ENCODE measurements at regions of chr17 and their contacts with region 1.

Region 1: DNA sequence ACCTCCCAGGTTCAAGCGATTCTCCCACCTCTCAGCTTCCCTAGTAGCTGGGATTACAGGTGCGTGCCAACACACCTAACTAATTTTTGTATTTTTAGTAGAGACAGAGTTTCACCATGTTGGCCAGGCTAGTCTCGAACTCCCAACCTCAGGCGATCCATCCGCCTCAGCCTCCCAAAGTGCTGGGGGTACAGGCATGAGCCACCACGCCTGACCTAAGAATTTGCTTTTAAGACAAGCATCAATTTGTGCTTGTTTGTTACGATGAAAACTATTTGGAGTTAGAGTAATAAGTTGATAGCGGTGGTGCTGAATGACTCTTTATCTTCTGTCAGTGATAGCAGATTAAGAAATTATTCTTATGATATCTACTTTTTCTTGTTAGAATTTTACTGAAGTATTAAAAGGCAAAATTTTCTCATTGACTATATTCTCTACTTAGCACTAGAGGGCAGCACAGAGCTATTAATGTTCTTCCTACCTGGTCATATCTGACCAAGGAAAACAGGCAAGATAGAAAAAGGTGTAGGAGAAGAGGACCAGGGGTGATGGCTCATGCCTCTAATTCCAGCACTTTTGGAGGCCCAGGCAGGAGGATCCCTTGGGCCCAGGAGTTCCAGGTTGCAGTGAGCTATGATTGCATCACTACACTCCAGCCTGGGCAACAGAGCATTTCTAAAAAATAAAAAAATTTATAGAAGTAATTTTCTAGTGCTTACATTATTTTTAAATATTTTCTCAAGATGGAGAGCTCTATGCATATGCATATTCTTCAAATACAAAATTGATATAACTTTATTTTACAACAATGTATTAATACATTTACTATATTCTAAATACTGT is 24.5 kb downstream of the STXBP4 start:
- DNase-seq: no peak
- H3K4me3 ChIP-seq: no peak overlapping the region
- H3K27ac ChIP-seq: no peak overlapping the region
- H3K4me1 ChIP-seq: no peaks in the 10 kb centered on the region
- H3K27me3 ChIP-seq: no peaks in the 10 kb centered on the region
- CTCF ChIP-seq: peak; percentile 53 to 57 (median 53)
- EP300 ChIP-seq: no peak
- POLR2A ChIP-seq: no peak

Region 2: DNA sequence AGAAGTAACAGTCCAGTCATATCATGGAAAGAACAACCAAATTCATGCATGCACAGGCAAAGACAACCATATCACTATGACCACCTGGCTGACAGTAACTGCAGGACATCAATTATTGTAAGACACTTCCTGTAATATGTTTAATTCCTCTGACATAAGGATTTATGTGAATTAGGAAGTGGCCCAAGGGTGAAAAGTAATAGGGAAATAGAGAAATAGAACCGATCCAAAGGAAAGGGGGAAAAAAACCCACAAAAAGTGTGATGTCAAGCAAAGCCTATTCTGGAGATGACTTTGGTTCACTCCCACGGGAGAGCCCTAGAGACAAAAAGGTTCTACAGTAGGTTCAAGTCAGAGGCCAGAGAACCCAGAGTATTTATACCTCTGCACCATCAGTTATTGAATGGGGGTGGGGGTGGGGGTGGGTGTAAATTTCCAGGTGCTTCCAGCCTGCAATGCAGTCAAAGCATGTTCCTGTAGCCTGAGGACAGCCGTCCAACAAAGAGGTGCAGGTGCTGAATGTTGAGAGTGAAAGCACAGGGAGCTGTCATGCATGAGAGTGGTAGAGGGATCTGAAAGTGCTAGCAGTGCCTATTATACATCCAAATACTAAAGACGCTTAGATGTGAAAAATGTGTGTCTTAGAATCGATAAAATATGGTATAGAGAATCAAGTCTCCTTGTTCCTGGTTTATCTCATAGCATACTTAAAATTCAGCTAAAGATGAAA is 176.1 kb after region 1 on chr17:
- intact Hi-C with region 1: no loop called
- DNase-seq: no peak
- H3K4me3 ChIP-seq: no peak overlapping the region
- H3K27ac ChIP-seq: no peak overlapping the region
- H3K4me1 ChIP-seq: no peaks in the 10 kb centered on the region
- H3K27me3 ChIP-seq: no peaks in the 10 kb centered on the region
- CTCF ChIP-seq: no peak
- EP300 ChIP-seq: no peak
- POLR2A ChIP-seq: no peak

Region 3: DNA sequence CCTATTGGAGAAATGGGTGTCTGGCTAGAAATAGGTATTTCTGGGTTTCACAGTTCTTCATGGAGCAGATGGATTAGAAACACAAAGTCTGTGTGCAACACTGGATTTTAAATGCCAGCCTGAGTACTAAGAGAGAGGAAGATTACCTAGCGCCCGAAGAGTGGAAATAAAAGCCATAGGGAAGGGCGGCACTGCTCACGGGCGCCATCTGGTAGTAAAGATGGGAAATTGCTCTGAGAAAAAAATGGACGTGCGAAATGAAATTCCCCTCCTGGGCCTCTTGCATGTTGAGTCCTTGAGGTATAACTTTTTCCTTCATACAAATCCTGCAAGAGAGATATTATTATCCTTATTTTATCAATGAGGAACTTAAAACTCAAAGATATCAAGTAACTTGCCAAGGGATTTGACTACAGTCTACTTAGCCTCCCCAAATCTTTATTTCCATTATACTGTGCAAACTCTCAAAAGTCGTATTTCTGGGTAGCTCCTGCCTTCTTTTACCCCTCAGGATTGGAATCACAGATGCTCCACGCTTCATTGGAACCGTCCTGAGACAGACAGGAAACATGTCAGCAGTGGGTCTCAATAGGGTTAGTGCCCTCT is 355.8 kb after region 1 on chr17:
- intact Hi-C with region 1: loop called (anchors 5 to 10 kb)
- DNase-seq: peak; percentile 38 to 63 (median 43)
- H3K4me3 ChIP-seq: no peak overlapping the region
- H3K27ac ChIP-seq: no peak overlapping the region
- H3K4me1 ChIP-seq: no peaks in the 10 kb centered on the region
- H3K27me3 ChIP-seq: no peaks in the 10 kb centered on the region
- CTCF ChIP-seq: peak; percentile 71 to 80 (median 73)
- EP300 ChIP-seq: no peak
- POLR2A ChIP-seq: no peak

Region 4: DNA sequence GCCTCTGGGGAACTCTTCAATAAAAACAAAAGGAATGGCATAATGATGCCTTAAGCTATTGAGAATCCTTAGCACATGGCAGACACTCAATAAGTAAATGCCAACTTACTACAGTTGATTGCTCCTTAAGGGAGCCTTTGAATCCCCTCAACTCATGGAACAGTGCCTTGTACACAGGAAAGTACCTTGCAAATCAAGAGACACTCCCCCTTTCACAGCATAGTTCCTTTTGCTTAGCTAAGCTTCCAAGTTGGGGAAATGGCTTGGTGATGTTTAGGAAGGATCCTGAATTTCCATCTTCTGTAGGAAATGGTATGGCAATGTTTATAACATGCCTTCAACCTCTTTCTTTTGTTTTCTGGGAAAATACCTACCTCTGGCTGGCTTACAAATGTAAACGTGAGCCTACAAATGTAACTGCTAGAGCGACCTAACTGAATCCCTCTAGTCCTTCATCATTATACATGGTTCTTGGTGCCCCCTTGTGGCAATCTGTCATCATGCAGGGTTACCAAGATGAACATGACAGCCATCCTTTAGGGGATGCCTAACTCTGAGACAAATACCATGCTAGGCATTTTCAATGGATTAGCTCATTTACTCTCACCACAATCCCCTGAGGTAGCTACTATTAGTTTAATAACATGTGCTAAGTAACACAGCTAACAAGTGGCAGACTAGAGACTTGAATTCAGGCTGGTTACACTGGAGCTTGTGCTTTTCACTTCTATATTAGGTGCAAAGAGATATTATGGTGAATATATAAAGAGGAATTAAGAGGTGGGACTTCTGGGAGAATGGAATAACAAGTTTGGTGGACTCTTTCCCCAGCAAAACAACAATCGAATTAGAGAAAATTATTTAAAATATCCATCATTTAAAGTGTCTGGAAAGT is 363.7 kb after region 1 on chr17:
- intact Hi-C with region 1: loop called in 2 of 4 experiments (anchors 5 to 10 kb)
- DNase-seq: peak; percentile 32 to 72 (median 43)
- H3K4me3 ChIP-seq: no peak overlapping the region
- H3K27ac ChIP-seq: no peak overlapping the region
- H3K4me1 ChIP-seq: no peaks in the 10 kb centered on the region
- H3K27me3 ChIP-seq: no peaks in the 10 kb centered on the region
- CTCF ChIP-seq: peak; percentile 39 to 44 (median 39)
- EP300 ChIP-seq: no peak
- POLR2A ChIP-seq: no peak

Region 5: GRCh38 chr17:55410722-55411462 is 417.9 kb after region 1 on chr17:
- intact Hi-C with region 1: no loop called
- DNase-seq: no peak
- H3K4me3 ChIP-seq: no peak overlapping the region
- H3K27ac ChIP-seq: no peak overlapping the region
- H3K4me1 ChIP-seq: no peaks in the 10 kb centered on the region
- H3K27me3 ChIP-seq: no peaks in the 10 kb centered on the region
- CTCF ChIP-seq: no peak
- EP300 ChIP-seq: no peak
- POLR2A ChIP-seq: no peak

Region 6: GRCh38 chr17:55513885-55514591 is 521.0 kb after region 1 on chr17:
- intact Hi-C with region 1: loop called in 1 of 4 experiments (anchors 10 kb)
- DNase-seq: peak in 4 of 5 donors; percentile 30 to 65 (median 56)
- H3K4me3 ChIP-seq: no peak overlapping the region
- H3K27ac ChIP-seq: no peak overlapping the region
- H3K4me1 ChIP-seq: no peaks in the 10 kb centered on the region
- H3K27me3 ChIP-seq: no peaks in the 10 kb centered on the region
- CTCF ChIP-seq: peak; percentile 46 to 71 (median 50)
- EP300 ChIP-seq: no peak
- POLR2A ChIP-seq: no peak

Measured in ovary (tissue), 10 donors.